ENCODE measurements at regions of chr11 and their contacts with region 1.

Region 1: DNA sequence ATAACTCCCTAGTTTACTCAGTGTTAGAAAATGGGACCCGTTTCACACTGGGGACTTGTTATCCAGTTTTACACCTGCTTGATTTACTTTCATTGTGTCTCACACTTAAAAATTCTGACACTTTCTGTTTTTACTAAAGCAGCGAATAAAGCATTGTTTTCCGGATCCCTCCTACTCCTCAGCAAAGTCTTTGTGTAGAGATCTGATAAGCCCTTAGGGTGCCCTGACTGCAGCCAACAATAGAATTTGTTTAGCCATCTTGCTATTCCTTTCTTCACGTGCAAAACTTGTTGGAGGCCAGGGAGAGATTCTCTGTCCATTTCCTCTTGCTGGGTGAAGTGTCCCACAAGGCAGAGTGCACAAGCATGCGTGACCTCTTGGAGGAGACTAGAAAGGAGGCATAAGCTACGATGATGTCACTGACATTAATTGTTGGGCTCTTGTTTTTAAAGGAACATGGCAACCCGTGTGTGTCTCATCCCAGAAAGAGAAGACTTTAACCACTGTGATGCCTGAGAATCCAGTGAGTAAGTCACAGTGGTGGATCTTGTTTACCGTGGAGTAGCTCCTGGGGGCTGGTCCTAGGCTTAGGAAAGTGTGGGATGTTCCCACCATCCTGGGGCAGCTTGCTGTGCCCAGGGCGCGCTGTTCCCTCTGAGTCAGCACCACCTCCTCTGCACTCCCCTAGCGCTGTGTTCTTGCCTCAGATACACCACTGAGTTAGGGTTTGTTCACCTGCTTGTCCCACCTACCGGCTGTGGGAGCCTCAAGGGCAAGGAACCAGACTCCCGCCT is 27.7 kb downstream of the MICAL2 start:
- DNase-seq: no peak

Region 2: DNA sequence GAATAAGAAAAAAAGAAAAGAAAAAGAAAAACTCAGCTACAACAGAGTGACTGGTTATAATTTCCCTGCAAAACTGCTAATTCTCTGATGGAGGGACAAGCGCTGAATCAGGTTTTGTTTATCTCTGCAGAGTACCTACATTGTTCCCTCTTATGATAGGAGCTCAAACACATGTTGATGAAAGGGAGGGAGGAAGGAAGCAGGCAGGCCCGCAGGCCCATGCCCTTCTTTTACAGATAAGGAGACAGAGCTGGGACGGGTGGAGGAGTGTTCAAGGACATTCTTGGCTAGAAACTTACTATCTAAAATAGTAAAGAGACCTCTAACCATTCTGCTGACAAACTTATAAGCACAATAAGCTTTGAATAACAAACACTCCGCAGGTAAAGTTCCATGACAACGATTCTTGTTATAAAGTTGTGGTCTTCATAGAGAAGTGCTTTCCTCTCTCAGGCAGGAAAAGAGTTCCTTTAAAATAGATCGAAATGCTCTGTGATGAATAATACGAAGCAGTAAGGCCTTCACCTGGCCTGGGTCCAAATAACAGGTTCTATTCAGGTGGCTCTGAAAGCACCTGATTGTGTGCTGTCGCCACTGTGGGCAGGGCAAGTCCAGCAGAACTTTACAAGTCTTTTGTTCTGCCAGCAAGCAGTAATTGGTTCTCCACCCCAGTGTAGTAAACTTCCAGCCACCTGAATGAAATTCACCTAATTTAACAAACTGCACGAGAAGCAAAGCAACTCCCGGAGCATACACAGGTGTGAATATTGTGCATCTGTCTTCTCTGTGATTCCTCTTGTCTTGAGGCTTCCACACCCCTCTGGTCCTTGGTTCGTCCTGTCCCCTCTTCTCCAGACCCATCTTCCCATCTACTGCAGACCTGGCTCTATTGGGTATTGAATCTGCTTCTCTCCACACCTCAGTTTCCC is 43.0 kb before region 1 on chr11:
- intact Hi-C with region 1: loop called in 1 of 2 experiments (anchors 1 kb)
- DNase-seq: no peak

Region 3: GRCh38 chr11:12110201-12110713 is 27.9 kb before region 1 on chr11 and contains the start of gene MICAL2:
- intact Hi-C with region 1: loop called in 1 of 2 experiments (anchors 1 kb)
- DNase-seq: peak; percentile 97
- total RNA-seq, gene MICAL2: 151 to 231 TPM

Region 4: DNA sequence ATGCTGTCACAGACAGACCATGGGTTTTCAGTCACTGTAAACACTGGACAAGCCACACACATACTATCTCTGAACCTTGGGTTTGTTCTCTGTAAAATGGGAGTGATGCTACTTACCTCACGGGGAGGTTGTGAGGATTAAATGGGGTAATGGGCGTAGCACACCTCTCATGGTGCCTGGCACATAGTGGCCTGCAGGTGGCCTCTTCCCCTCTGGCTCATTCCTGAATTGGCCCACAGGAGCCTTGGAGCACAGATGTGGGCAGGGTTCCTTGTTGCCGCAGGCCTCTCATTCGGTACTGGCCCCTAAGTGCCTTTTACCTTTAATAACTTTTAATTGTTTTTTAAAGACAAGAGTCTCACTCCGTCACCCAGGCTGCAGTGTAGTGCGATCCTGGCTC is 16.1 kb before region 1 on chr11:
- intact Hi-C with region 1: loop called in 1 of 2 experiments (anchors 2 kb)
- DNase-seq: no peak

Measured in posterior vena cava (tissue), 2 donors.